PC-9 (cell line): ENCODE measurements at regions of chr20 and their contacts with region 1.

Region 1: DNA sequence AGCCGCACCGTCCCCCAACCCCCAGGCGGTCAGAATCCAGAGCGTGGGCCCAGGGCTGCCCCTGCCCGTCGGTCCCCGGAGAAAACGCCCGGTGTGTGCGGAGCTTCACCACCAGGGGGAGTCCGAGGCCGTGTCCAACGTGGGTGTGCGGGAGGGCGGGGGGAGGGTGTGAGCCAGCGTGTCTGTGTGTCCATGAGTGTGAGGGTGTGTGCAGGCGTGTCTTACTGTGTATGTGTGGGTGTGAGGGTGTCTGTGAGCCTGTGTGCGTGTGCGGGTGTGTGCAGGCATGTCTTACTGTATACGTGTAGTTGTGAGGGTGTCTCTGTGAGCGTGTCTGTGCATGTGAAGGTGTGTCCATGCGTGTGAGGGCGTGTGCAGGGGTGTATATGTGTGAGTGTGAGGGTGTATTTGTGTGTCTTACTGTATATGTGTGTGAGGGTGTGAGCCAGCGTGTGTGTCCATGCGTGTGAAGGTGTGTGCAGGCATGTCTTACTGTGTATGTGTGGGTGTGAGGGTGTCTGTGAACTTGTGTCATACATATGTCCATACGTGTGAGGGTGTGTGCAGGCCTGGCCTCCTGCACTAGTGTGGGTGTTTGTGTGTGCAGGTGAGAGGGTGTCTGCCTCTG is 24.6 kb upstream of the GATA5 start:
- DNase-seq: peak in 1 of 2 experiments; percentile 72
- H3K4me3 ChIP-seq: no peak overlapping the region
- H3K27ac ChIP-seq: no peak overlapping the region
- H3K4me1 ChIP-seq: no peaks in the 10 kb centered on the region
- H3K27me3 ChIP-seq: no peaks in the 10 kb centered on the region
- CTCF ChIP-seq: peak; percentile 95

Region 2: GRCh38 chr20:62407221-62407992 is 92.9 kb before region 1 on chr20 and contains the start of gene CABLES2:
- CTCF ChIA-PET with region 1: no interaction called
- POLR2A ChIA-PET with region 1: no interaction called
- intact Hi-C with region 1: loop called (anchors 5 kb)
- DNase-seq: peak; percentile 85 to 96
- H3K4me3 ChIP-seq: peak within 1 kb of the TSS; percentile 72
- H3K27ac ChIP-seq: no peak within 1 kb of the TSS
- H3K4me1 ChIP-seq: peaks cover 18% of the 10 kb centered on the region
- H3K27me3 ChIP-seq: no peaks in the 10 kb centered on the region
- CTCF ChIP-seq: peak; percentile 35; the same call in 1 of the 2 replicates
- total RNA-seq, gene CABLES2: 11.2 and 14.1 TPM in 2 replicates

Region 3: GRCh38 chr20:62616728-62617621 is 116.6 kb after region 1 on chr20:
- CTCF ChIA-PET with region 1: interaction called, 5 read pairs
- POLR2A ChIA-PET with region 1: no interaction called
- intact Hi-C with region 1: loop called (anchors 2 kb)
- DNase-seq: peak; percentile 52 to 84
- H3K4me3 ChIP-seq: no peak overlapping the region
- H3K27ac ChIP-seq: peak overlapping the region; percentile 76
- H3K4me1 ChIP-seq: peaks cover 47% of the 10 kb centered on the region
- H3K27me3 ChIP-seq: no peaks in the 10 kb centered on the region
- CTCF ChIP-seq: peak; percentile 97

Region 4: GRCh38 chr20:62668441-62669027 is 168.2 kb after region 1 on chr20:
- CTCF ChIA-PET with region 1: no interaction called
- POLR2A ChIA-PET with region 1: no interaction called
- intact Hi-C with region 1: loop called (anchors 1 kb)
- DNase-seq: peak; percentile 53 to 76
- H3K4me3 ChIP-seq: no peak overlapping the region
- H3K27ac ChIP-seq: no peak overlapping the region
- H3K4me1 ChIP-seq: no peaks in the 10 kb centered on the region
- H3K27me3 ChIP-seq: no peaks in the 10 kb centered on the region
- CTCF ChIP-seq: peak; percentile 91

Region 5: DNA sequence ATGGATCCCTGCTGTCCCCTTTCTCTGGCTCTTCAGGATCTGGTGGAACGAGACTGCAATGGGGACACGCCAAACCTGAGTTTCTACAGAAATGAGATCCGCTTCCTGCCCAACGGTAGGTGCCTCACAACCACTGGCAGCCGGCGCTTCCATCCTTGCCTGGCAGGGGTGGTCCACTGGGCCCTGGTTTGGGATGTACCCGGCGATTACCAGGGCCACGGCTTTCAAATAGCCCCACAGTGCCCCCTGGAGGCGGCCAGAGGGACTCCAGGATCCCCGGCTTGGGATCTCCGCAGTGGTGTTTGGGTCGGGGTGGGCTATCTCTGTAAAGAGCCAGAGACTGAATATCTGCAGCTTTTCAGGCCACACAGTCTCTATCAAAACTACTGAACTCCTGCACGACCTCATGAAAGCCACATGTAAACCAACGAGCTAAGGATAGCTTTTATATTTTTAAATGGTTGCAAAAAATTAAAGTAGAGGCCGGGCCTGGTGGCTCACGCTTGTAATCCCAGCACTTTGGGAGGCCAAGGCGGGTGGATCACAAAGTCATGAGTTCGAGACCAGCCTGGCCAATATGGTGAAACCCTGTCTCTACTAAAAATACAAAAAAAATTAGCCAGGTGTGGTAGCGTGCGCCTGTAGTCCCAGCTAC is 308.0 kb after region 1 on chr20:
- CTCF ChIA-PET with region 1: interaction called, 10 read pairs
- POLR2A ChIA-PET with region 1: no interaction called
- intact Hi-C with region 1: no loop called
- DNase-seq: peak in 1 of 2 experiments; percentile 68
- H3K4me3 ChIP-seq: no peak overlapping the region
- H3K27ac ChIP-seq: no peak overlapping the region
- H3K4me1 ChIP-seq: peaks cover 14% of the 10 kb centered on the region
- H3K27me3 ChIP-seq: no peaks in the 10 kb centered on the region
- CTCF ChIP-seq: peak; percentile 99